Activated CD8-positive, alpha-beta T cell treated with anti-CD3 and anti-CD28 coated beads, Interleukin-2, amount 10 ng/mL, durations not matched to agents 7 days and 5 days (primary cell): ENCODE measurements at regions of chr19 and their contacts with region 1.

Region 1: DNA sequence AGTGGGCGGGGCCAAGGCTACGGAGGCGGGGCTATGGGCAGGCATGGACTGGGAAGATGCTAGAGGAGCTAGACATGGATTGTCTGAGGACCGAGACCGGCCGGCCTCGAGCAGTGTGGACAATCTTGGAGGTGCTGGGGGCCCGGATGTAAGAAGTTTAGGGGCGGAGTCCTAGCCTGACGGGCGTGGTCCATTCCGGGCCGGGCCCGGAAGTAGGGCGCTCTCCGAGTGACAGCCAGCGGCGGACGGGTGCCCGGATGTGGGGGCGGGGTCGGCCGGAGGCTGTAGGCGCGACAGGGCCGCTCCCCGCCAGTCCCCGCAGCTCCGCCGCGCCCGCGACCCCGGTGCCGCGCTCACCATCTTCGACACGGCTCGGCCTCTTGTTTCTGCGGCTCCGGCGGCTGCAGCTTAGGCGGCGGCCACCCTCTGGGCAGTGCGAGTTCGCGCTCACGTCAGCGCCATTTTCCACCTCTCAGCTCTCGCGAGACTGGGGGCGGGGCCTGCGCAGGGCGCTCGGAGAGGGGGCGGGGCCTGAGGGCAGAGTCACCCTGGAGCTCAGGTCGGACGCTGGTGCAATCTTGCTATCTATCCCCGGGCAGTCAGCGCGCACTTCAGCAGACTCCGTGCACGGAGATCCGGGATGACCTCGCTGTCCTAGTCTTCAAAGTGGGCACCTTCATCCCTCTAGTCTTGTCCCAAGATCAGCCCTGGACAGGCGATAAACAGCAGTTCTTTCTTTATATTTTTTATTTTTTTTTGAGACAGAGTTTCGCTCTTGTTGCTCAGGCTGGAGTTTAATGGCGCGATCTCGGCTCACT is at the start of gene ZNF414:
- DNase-seq: peak; percentile 97
- ATAC-seq: peak; percentile 81
- H3K4me3 Mint-ChIP-seq: peak within 1 kb of the TSS; percentile 86
- H3K27ac Mint-ChIP-seq: peak within 1 kb of the TSS; percentile 97
- H3K4me1 Mint-ChIP-seq: peaks cover 62% of the 10 kb centered on the region
- H3K27me3 Mint-ChIP-seq: no peaks in the 10 kb centered on the region
- total RNA-seq, gene ZNF414: 28.7 to 36.2 TPM

Region 2: DNA sequence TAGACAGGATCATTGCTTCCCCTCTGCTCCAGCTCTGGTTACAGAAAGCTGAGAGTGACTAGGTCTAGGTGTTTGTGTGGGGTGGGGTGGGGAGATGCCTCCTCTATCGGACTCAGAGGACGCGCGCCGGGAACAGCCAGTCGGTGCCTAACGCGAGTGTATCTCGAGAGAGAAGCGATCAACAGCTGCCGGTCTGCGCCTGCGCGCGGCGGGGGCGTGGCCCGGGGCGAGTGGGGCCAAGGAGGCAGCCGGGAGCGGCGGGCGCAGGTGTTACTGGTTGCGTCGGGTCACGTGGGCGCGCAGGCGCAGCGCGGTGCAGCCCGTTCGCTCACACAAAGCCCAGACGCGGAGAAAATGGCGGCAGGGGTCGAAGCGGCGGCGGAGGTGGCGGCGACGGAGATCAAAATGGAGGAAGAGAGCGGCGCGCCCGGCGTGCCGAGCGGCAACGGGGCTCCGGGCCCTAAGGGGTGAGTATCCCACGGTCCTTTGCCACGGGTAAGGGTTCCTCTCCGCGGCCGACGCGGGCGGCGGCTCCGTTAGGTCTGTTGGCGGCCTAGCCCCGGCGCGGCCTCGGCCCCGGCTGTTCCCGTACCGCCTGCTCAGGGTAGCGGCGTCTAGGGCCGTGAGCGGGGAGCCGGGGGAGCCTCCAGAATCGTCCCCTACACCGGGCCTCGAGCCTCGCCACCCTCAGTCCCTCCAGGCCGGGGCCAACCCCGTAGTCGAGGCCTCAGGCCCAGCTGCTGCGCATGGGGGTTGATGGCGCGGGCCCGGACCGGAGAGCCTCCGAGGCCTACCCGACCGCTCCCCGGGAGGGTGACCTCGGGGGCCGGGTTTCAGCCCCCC is 69.0 kb before region 1 on chr19 and contains the start of gene HNRNPM:
- CTCF ChIA-PET with region 1: no interaction called
- POLR2A ChIA-PET with region 1: interaction called, 16 read pairs
- DNase-seq: peak; percentile 100
- ATAC-seq: peak; percentile 96
- H3K4me3 Mint-ChIP-seq: peak within 1 kb of the TSS; percentile 94
- H3K27ac Mint-ChIP-seq: peak within 1 kb of the TSS; percentile 92
- H3K4me1 Mint-ChIP-seq: peaks cover 40% of the 10 kb centered on the region
- H3K27me3 Mint-ChIP-seq: no peaks in the 10 kb centered on the region
- total RNA-seq, gene HNRNPM: 283 to 291 TPM

Region 3: GRCh38 chr19:8487137-8487851 is 26.6 kb before region 1 on chr19:
- CTCF ChIA-PET with region 1: interaction called, 26 read pairs
- POLR2A ChIA-PET with region 1: interaction called, 29 read pairs
- DNase-seq: peak; percentile 80
- ATAC-seq: peak; percentile 86
- H3K4me3 Mint-ChIP-seq: peak overlapping the region; percentile 35
- H3K27ac Mint-ChIP-seq: peak overlapping the region; percentile 90
- H3K4me1 Mint-ChIP-seq: peaks cover 48% of the 10 kb centered on the region
- H3K27me3 Mint-ChIP-seq: no peaks in the 10 kb centered on the region

Region 4: GRCh38 chr19:8494158-8494557 is 19.7 kb before region 1 on chr19:
- CTCF ChIA-PET with region 1: no interaction called
- POLR2A ChIA-PET with region 1: interaction called, 29 read pairs
- DNase-seq: peak; percentile 46
- ATAC-seq: peak; percentile 68
- H3K4me3 Mint-ChIP-seq: no peak overlapping the region
- H3K27ac Mint-ChIP-seq: peak overlapping the region; percentile 86
- H3K4me1 Mint-ChIP-seq: peaks cover 32% of the 10 kb centered on the region
- H3K27me3 Mint-ChIP-seq: no peaks in the 10 kb centered on the region

Region 5: DNA sequence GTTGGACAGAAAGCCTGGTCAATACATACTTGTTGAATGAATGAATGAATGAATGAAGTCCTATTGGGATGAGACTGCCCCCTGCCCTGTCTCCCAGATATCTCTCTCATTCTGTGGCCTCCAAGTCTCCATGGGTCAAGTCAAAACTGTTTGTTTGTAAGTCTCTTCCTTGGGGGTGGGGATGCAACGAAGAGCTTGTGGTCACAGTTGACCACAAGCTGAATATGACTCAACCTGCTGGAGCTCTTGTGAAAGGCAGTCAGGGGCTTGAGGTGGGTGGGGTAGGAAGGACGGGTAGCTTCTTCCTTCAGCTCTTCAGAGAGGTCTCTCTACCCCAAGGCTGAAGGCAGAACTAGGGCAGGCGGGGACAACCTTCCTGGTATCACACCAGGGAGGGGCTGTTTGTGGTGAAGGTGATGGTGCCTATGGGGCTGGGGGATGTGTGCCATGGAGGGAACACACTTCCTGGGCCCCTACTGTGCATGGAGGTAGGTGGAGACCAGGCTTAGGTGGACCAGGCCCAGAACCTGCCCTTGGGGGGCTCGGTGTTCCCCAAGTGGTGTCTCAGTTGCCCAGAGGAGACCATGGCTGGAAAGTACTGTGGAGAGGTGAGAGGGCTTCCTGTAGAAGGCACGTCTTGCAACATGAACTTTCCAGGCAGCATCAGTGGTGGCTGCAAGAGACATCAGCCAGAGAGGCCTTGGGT is 55.3 kb after region 1 on chr19:
- CTCF ChIA-PET with region 1: interaction called, 6 read pairs
- POLR2A ChIA-PET with region 1: interaction called, 50 read pairs
- DNase-seq: peak; percentile 91
- ATAC-seq: peak; percentile 86
- H3K4me3 Mint-ChIP-seq: peak overlapping the region; percentile 65
- H3K27ac Mint-ChIP-seq: peak overlapping the region; percentile 95
- H3K4me1 Mint-ChIP-seq: peaks cover 84% of the 10 kb centered on the region
- H3K27me3 Mint-ChIP-seq: no peaks in the 10 kb centered on the region

Region 6: DNA sequence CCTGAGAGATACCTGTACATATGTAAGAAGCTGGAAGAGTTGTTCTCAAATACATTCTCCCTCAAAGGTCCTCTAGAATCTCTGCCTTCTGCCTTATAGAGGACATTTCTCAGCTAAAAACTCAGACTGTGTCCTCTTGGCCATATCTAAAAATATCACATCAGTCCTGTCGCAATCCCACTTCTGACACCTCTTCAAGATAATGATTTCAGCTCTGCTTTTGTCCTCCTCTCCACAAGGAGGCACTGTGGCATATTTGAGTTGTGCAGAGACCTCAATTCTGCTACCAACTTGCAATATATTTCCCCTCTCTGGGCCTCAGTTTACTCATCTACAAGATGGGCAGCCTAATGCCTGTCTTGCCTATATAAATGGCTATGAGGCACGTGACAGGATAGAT is 80.0 kb after region 1 on chr19:
- CTCF ChIA-PET with region 1: no interaction called
- POLR2A ChIA-PET with region 1: no interaction called
- DNase-seq: no peak
- ATAC-seq: no peak
- H3K4me3 Mint-ChIP-seq: no peak overlapping the region
- H3K27ac Mint-ChIP-seq: no peak overlapping the region
- H3K4me1 Mint-ChIP-seq: peaks cover 10% of the 10 kb centered on the region
- H3K27me3 Mint-ChIP-seq: peaks cover 12% of the 10 kb centered on the region